GM18951 (cell line): ENCODE measurements at regions of chr5 and their contacts with region 1.

Region 1: DNA sequence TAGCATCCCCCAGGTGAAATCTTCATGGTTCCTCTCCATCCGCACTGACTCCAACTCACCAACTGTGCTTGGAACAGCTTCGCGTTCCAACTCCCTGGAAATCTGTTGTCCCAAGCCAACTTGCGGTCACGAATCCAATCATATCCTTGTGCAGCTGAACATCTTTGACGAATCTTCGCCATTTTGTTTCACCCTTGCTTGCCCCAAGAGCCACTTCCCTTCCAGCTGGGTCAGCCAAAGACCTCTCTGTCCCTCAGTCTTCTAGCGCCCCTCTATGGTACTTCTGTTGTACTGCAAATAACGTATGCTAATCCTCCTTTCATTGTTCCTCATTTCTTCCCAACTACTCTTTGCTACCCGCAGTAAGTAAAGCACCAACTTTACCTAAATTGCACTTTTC is 61.0 kb upstream of the TARS1 start:
- POLR2A ChIP-seq: no peak

Region 2: GRCh38 chr5:32709781-32710549 is 669.8 kb before region 1 on chr5:
- in situ Hi-C with region 1: loop called (anchors 25 kb)
- POLR2A ChIP-seq: no peak

Region 3: DNA sequence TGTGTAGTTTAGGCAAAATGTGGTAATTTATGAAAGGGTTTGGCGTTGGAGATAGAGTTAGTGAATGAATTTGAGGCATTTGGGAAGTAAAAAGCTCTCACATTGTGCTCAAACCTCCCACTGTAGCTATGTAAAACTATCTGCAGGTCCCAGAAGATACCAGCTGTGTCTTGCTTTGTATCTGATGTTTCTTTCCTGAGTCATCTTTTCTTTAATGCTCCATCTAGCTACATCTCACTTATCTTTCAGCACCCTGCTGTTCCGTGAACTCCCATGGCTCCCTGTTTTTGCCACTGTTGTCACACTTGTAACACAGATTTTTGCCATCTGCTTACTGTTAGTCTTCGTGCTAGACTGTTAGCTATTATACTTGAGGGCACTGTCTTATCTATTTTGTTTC is 415.5 kb before region 1 on chr5:
- in situ Hi-C with region 1: loop called (anchors 25 kb)
- POLR2A ChIP-seq: no peak